CD8-positive, alpha-beta T cell (primary cell): ENCODE measurements at regions of chr12 and their contacts with region 1.

Region 1: GRCh38 chr12:95003213-95003920 is at the start of gene NDUFA12:
- DNase-seq: peak; percentile 87 to 98 (median 94)
- ATAC-seq: peak; percentile 99
- H3K4me3 ChIP-seq: peak within 1 kb of the TSS; percentile 74 to 97
- H3K4me3 Mint-ChIP-seq: peak within 1 kb of the TSS; percentile 93
- H3K27ac ChIP-seq: peak within 1 kb of the TSS; percentile 64 to 82
- H3K27ac Mint-ChIP-seq: peak within 1 kb of the TSS; percentile 94
- H3K4me1 ChIP-seq: peaks cover 46% of the 10 kb centered on the region
- H3K4me1 Mint-ChIP-seq: peaks cover 57% of the 10 kb centered on the region
- H3K27me3 ChIP-seq: no peaks in the 10 kb centered on the region
- H3K27me3 Mint-ChIP-seq: no peaks in the 10 kb centered on the region
- CTCF ChIP-seq: no peak
- total RNA-seq, gene NDUFA12: 37.4 to 42.4 TPM

Region 2: GRCh38 chr12:93441617-93442410 is 1561.6 kb before region 1 on chr12 and contains the start of gene UBE2N:
- CTCF ChIA-PET with region 1: no interaction called
- POLR2A ChIA-PET with region 1: no interaction called
- intact Hi-C with region 1: loop called in 1 of 2 experiments (anchors 10 kb)
- DNase-seq: peak; percentile 92 to 97 (median 96)
- ATAC-seq: peak; percentile 83
- H3K4me3 ChIP-seq: peak within 1 kb of the TSS; percentile 78
- H3K4me3 Mint-ChIP-seq: peak within 1 kb of the TSS; percentile 97
- H3K27ac ChIP-seq: peak within 1 kb of the TSS; percentile 87 to 90
- H3K27ac Mint-ChIP-seq: peak within 1 kb of the TSS; percentile 96
- H3K4me1 ChIP-seq: peaks cover 47% of the 10 kb centered on the region
- H3K4me1 Mint-ChIP-seq: peaks cover 48% of the 10 kb centered on the region
- H3K27me3 ChIP-seq: no peaks in the 10 kb centered on the region
- H3K27me3 Mint-ChIP-seq: no peaks in the 10 kb centered on the region
- CTCF ChIP-seq: no peak
- total RNA-seq, gene UBE2N: 89.5 to 93.6 TPM

Region 3: GRCh38 chr12:94987801-94988200 is 15.6 kb before region 1 on chr12:
- CTCF ChIA-PET with region 1: no interaction called
- POLR2A ChIA-PET with region 1: interaction called, 26 read pairs
- intact Hi-C with region 1: loop called in 1 of 2 experiments (anchors 1 kb)
- DNase-seq: peak in 2 of 9 experiments; percentile 49 to 69
- ATAC-seq: peak; percentile 65
- H3K4me3 ChIP-seq: no peak overlapping the region
- H3K4me3 Mint-ChIP-seq: peak overlapping the region; percentile 19
- H3K27ac ChIP-seq: peak overlapping the region; percentile 43 to 46
- H3K27ac Mint-ChIP-seq: peak overlapping the region; percentile 64
- H3K4me1 ChIP-seq: peaks cover 56% of the 10 kb centered on the region
- H3K4me1 Mint-ChIP-seq: peaks cover 66% of the 10 kb centered on the region
- H3K27me3 ChIP-seq: no peaks in the 10 kb centered on the region
- H3K27me3 Mint-ChIP-seq: no peaks in the 10 kb centered on the region
- CTCF ChIP-seq: no peak

Region 4: GRCh38 chr12:95096852-95097251 is 93.5 kb after region 1 on chr12:
- CTCF ChIA-PET with region 1: no interaction called
- POLR2A ChIA-PET with region 1: no interaction called
- intact Hi-C with region 1: no loop called
- DNase-seq: no peak
- ATAC-seq: no peak
- H3K4me3 ChIP-seq: no peak overlapping the region
- H3K4me3 Mint-ChIP-seq: no peak overlapping the region
- H3K27ac ChIP-seq: no peak overlapping the region
- H3K27ac Mint-ChIP-seq: no peak overlapping the region
- H3K4me1 ChIP-seq: no peaks in the 10 kb centered on the region
- H3K4me1 Mint-ChIP-seq: no peaks in the 10 kb centered on the region
- H3K27me3 ChIP-seq: no peaks in the 10 kb centered on the region
- H3K27me3 Mint-ChIP-seq: no peaks in the 10 kb centered on the region
- CTCF ChIP-seq: no peak

Region 5: DNA sequence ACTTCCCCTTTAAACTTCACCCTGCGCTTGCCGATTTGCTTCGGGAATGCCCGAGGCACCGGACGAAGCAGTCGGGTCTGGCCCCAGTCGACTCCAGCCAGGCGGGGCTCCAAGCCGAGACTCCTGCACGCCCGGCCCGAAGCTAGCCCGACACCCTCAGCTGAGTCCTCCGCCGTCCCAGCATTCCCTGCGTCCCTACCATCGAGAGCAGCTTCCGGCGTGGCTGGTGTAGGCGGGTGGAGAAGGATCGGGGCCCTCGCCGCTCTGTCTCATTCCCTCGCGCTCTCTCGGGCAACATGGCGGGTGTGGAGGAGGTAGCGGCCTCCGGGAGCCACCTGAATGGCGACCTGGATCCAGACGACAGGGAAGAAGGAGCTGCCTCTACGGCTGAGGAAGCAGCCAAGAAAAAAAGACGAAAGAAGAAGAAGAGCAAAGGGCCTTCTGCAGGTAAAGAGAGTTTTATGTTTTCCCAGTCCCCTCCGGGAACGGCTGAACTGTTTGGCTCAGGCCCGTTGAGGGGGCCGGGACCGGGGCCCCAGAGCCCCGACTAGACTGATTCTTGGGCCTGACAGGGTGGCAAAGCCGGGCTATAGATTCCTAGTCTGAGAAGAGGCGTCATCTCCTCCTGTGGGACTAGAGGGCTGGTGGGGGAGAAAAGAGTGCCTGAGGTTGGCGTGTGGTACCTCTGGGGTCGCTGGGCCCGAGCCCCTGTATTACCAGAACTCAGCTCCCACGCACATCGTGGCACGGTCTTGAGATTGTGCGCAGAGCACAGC is 470.7 kb after region 1 on chr12 and contains the start of gene METAP2:
- CTCF ChIA-PET with region 1: no interaction called
- POLR2A ChIA-PET with region 1: interaction called, 4 read pairs
- intact Hi-C with region 1: loop called (anchors 2 to 5 kb)
- DNase-seq: peak; percentile 73 to 94 (median 91)
- ATAC-seq: peak; percentile 97
- H3K4me3 ChIP-seq: peak within 1 kb of the TSS; percentile 77 to 88
- H3K4me3 Mint-ChIP-seq: peak within 1 kb of the TSS; percentile 99
- H3K27ac ChIP-seq: peak within 1 kb of the TSS; percentile 78 to 84
- H3K27ac Mint-ChIP-seq: peak within 1 kb of the TSS; percentile 98
- H3K4me1 ChIP-seq: peaks cover 29% of the 10 kb centered on the region
- H3K4me1 Mint-ChIP-seq: peaks cover 54% of the 10 kb centered on the region
- H3K27me3 ChIP-seq: no peaks in the 10 kb centered on the region
- H3K27me3 Mint-ChIP-seq: no peaks in the 10 kb centered on the region
- CTCF ChIP-seq: no peak
- total RNA-seq, gene METAP2: 68.3 to 69.9 TPM

Region 6: DNA sequence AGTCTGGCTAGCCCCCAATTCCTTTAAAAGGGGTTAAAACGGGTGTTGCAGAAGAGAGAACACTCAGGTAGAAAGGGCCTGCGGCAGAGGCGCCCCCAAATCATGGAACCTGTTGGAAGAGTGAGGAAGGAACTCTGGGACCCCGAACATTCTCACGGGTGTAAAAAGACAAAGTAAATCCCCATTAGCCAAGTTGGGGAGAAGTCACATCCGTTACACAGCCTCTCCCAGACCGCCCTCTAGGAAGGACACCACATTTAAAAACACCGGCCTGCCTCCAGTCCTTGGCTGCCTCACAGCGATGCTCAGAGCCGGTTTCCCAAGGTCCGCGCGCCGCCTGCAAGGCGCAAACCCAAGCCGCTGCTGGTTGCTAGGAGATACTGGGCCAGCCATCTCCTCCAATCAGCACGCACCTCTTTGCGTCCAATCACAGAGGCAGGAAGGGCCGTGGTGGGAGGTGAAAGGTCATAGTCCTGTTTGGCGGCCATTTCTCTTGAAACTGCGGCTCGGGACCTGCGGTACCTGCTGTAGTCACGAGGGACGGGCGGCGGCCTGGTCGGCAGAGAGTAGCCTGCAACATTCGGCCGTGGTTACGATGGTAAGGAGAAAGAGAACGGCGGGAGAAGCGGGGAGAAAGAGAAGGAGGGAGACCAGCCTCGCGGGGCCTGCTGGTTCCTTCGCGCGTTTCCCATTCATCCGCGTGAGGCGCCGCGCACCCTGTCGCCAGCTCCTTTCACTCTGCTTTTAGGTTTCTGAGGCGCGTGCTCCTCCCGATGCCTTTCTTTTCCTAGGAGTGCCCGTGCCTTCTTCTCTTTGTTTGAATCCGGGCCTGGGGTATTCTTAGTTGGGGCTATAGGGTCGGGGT is 855.3 kb after region 1 on chr12 and contains the start of gene SNRPF:
- CTCF ChIA-PET with region 1: no interaction called
- POLR2A ChIA-PET with region 1: no interaction called
- intact Hi-C with region 1: loop called (anchors 2 to 5 kb)
- DNase-seq: peak; percentile 88 to 97 (median 92)
- ATAC-seq: peak; percentile 94
- H3K4me3 ChIP-seq: peak within 1 kb of the TSS; percentile 83 to 86
- H3K4me3 Mint-ChIP-seq: no peak within 1 kb of the TSS
- H3K27ac ChIP-seq: peak within 1 kb of the TSS; percentile 79 to 92
- H3K27ac Mint-ChIP-seq: no peak within 1 kb of the TSS
- H3K4me1 ChIP-seq: peaks cover 22% of the 10 kb centered on the region
- H3K4me1 Mint-ChIP-seq: peaks cover 21% of the 10 kb centered on the region
- H3K27me3 ChIP-seq: peaks cover 0 to 2% of the 10 kb centered on the region in 2 experiments
- H3K27me3 Mint-ChIP-seq: peaks cover 3% of the 10 kb centered on the region
- CTCF ChIP-seq: no peak
- total RNA-seq, gene SNRPF: 42.9 to 49.2 TPM